Lower leg skin (tissue), 4 donors: ENCODE measurements at regions of chr3 and their contacts with region 1.

Region 1: GRCh38 chr3:73056014-73056844 is 5.2 kb upstream of the EBLN2 start:
- DNase-seq: no peak
- H3K4me3 ChIP-seq: no peak overlapping the region
- CTCF ChIP-seq: no peak
- POLR2A ChIP-seq: no peak

Region 2: GRCh38 chr3:72949016-72949415 is 107.2 kb before region 1 on chr3:
- intact Hi-C with region 1: loop called (anchors 10 kb)
- DNase-seq: peak in 1 of 2 donors; percentile 45
- H3K4me3 ChIP-seq: no peak overlapping the region
- CTCF ChIP-seq: no peak
- POLR2A ChIP-seq: no peak

Region 3: GRCh38 chr3:73255609-73256029 is 199.4 kb after region 1 on chr3:
- intact Hi-C with region 1: no loop called
- DNase-seq: no peak
- H3K4me3 ChIP-seq: no peak overlapping the region
- CTCF ChIP-seq: no peak
- POLR2A ChIP-seq: no peak